ENCODE measurements at regions of chr6 and their contacts with region 1.

Region 1: DNA sequence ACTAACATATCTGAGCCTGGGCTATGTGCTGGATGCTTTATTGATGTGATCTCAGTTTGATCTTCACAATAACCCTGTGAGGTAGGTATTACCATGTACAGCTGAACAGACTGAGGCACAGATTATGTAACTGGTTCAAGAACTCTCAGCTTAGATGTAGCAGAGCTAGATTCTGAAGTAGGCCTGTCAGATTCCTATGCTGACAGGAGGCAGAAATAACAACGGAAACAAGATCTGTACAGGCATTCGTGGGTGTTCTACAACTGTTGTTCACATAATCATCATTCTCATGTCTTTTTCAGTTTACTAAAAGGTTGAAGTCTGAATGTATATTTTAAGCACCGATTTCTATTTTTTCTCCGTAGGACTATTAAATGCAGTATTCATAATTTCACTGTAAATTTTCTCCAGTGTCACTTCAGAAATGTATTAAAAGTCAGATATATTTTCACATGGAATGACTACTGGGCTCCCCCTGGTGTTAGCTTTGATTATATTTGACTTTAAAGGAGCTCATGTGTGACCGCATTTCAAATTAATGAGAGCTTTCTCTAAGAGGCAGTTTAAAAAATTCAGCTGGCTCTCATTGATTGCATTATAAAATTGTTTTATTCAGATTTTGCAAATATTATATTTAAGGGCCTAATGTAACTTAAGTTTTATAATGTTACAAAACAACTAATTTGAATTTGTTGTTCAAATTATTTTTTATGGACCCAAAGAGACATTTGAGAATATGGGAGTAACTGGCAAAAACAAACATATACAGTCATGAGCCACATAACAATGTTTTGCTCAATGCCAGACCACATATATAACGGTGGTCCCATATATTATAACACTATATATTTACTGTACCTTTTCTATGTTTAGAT is 36.4 kb upstream of the SLC17A4 start:
- DNase-seq: peak; percentile 48
- H3K4me3 ChIP-seq: no peak overlapping the region
- H3K27ac ChIP-seq: no peak overlapping the region
- H3K4me1 ChIP-seq: peaks cover 23% of the 10 kb centered on the region
- H3K27me3 ChIP-seq: no peaks in the 10 kb centered on the region
- CTCF ChIP-seq: peak; percentile 35 to 42
- POLR2A ChIP-seq: no peak

Region 2: DNA sequence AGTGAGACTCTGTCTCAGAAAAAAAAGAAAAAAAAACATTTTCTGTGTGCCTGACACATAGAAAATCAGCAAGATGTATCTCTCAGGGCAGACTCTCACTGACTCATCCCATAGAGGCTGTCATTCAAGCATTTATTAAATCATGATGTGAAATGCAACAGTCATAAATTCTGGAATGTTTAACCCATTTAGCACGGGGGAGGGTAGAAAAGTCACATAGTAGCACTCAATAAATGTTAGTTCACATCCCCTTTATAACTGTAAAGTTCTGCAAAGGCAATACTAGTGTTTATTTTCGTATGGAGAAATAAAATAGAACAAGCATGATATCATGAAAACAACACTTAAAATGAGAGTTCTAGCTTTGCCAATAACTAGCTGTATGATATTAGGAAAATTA is 454.4 kb before region 1 on chr6:
- CTCF ChIA-PET with region 1: interaction called, 22 read pairs
- POLR2A ChIA-PET with region 1: no interaction called
- dilution Hi-C with region 1: no loop called
- intact Hi-C with region 1: no loop called
- DNase-seq: no peak
- H3K4me3 ChIP-seq: no peak overlapping the region
- H3K27ac ChIP-seq: no peak overlapping the region
- H3K4me1 ChIP-seq: no peaks in the 10 kb centered on the region
- H3K27me3 ChIP-seq: no peaks in the 10 kb centered on the region
- CTCF ChIP-seq: no peak
- POLR2A ChIP-seq: no peak

Region 3: GRCh38 chr6:25601800-25602673 is 116.1 kb before region 1 on chr6:
- CTCF ChIA-PET with region 1: interaction called, 3 read pairs
- POLR2A ChIA-PET with region 1: no interaction called
- dilution Hi-C with region 1: no loop called
- intact Hi-C with region 1: loop called (anchors 2 kb)
- DNase-seq: peak; percentile 62
- H3K4me3 ChIP-seq: no peak overlapping the region
- H3K27ac ChIP-seq: no peak overlapping the region
- H3K4me1 ChIP-seq: no peaks in the 10 kb centered on the region
- H3K27me3 ChIP-seq: peaks cover 0 to 2% of the 10 kb centered on the region in 2 experiments
- CTCF ChIP-seq: peak; percentile 10 to 19
- POLR2A ChIP-seq: no peak

Region 4: GRCh38 chr6:25670793-25671513 is 47.1 kb before region 1 on chr6:
- CTCF ChIA-PET with region 1: interaction called, 77 read pairs
- POLR2A ChIA-PET with region 1: no interaction called
- dilution Hi-C with region 1: no loop called
- intact Hi-C with region 1: loop called (anchors 5 kb)
- DNase-seq: peak; percentile 2
- H3K4me3 ChIP-seq: no peak overlapping the region
- H3K27ac ChIP-seq: no peak overlapping the region
- H3K4me1 ChIP-seq: no peaks in the 10 kb centered on the region
- H3K27me3 ChIP-seq: no peaks in the 10 kb centered on the region
- CTCF ChIP-seq: no peak
- POLR2A ChIP-seq: no peak

Region 5: DNA sequence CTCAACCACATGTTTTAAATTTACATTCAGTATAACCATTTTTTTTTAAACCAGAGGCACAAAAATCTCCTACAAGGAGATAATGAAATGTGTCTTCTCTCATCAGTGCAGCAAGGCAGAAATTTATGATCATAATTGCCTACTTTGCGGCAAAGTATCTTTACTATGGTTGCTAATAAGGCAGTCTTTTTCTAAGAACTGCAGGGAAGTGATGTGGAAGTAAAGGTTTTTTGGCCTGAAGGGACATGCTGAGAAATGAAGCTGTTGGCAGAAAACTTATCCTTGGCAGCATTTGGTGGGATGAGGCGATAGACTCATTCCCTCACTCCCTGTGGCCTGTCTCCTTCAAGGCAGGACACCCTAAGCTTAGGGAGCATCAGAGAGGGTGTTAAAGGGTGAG is 17.3 kb before region 1 on chr6:
- CTCF ChIA-PET with region 1: interaction called, 22 read pairs
- POLR2A ChIA-PET with region 1: no interaction called
- dilution Hi-C with region 1: no loop called
- intact Hi-C with region 1: no loop called
- DNase-seq: no peak
- H3K4me3 ChIP-seq: no peak overlapping the region
- H3K27ac ChIP-seq: no peak overlapping the region
- H3K4me1 ChIP-seq: no peaks in the 10 kb centered on the region
- H3K27me3 ChIP-seq: peaks cover 0 to 4% of the 10 kb centered on the region in 2 experiments
- CTCF ChIP-seq: no peak
- POLR2A ChIP-seq: no peak

Region 6: DNA sequence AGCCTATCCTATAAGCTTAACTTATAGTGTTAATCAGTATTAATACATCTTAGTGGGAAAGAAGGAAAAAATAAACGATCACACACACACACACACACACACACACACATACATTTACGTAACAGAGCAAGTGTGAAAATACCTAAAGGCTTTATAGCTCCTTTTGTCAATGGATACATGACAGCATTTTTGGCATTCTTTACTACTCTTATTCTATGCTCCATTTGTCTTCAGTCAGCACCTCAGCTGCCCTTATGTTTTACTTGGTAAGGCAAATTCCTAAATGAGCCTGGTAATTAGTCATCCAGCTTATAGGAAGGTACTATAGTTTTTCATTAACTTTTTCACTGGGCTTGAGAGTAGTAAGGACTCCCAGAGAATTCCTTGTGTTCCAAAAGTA is 181.0 kb after region 1 on chr6:
- CTCF ChIA-PET with region 1: interaction called, 10 read pairs
- POLR2A ChIA-PET with region 1: no interaction called
- dilution Hi-C with region 1: no loop called
- intact Hi-C with region 1: no loop called
- DNase-seq: no peak
- H3K4me3 ChIP-seq: no peak overlapping the region
- H3K27ac ChIP-seq: no peak overlapping the region
- H3K4me1 ChIP-seq: no peaks in the 10 kb centered on the region
- H3K27me3 ChIP-seq: peaks cover 2% of the 10 kb centered on the region in 2 experiments
- CTCF ChIP-seq: no peak
- POLR2A ChIP-seq: no peak

Measured in endothelial cell of umbilical vein (primary cell).